ENCODE measurements at regions of chr2 and their contacts with region 1.

Region 1: DNA sequence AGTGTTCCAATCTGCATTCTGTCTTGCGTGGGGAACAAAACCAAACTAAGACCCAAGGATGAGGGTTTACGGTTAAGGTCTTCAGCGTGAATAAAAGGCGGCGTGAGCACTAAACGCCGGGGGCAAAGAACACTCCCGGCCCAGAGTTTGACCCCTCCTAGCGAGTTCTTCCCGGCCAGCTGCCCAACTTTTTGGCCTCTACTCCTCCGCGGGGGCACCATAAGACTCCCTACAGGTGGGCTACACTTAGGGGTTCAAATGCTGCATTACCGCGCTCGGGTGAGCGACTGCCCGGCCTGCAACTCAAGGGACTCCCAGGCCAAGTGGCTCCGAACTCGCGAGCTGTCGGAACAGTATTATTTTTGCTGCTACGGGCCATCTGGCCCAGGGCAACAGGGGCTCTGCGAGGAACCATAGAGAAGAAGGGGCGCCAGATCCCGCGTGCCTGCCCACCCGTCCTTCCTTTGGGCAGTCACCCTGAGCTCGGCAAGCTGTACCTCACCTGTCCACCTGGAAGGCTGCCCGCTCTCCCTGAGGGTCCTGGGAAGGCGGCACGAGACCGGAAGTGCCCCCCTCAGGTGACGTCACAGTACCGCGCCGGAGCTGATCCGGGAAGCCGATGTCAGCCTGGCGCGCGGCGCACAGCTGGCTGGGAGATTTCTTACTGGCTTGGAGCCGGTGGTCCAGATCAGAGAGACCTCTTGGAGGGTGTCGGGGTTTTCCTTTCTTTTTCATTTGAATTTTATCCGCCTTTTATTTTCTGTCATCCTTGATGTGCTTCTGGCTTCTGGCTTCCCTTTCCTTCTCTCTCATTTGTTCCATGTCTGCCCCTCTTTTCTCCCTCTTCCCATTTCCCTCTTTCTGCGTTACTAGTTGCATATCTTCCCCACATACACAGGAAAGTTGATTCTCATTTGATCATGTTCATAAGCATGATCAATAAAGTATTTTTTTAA is at the start of gene LDAH:
- DNase-seq: peak; percentile 76
- H3K4me3 Mint-ChIP-seq: peak within 1 kb of the TSS; percentile 95
- H3K27ac Mint-ChIP-seq: peak within 1 kb of the TSS; percentile 98
- H3K4me1 Mint-ChIP-seq: peaks cover 21% of the 10 kb centered on the region
- H3K27me3 Mint-ChIP-seq: peaks cover 3% of the 10 kb centered on the region
- total RNA-seq, gene LDAH: 34.7 and 35.9 TPM in 2 replicates

Region 2: GRCh38 chr2:20365249-20365817 is 457.5 kb before region 1 on chr2:
- intact Hi-C with region 1: loop called (anchors 2 kb)
- DNase-seq: peak; percentile 52
- H3K4me3 Mint-ChIP-seq: peak overlapping the region; percentile 9
- H3K27ac Mint-ChIP-seq: peak overlapping the region; percentile 51
- H3K4me1 Mint-ChIP-seq: peaks cover 25% of the 10 kb centered on the region
- H3K27me3 Mint-ChIP-seq: peaks cover 4% of the 10 kb centered on the region

Region 3: GRCh38 chr2:20650880-20651730 is 171.7 kb before region 1 on chr2 and contains the start of gene HS1BP3:
- intact Hi-C with region 1: loop called (anchors 5 kb)
- DNase-seq: peak; percentile 88
- H3K4me3 Mint-ChIP-seq: peak within 1 kb of the TSS; percentile 87
- H3K27ac Mint-ChIP-seq: peak within 1 kb of the TSS; percentile 85
- H3K4me1 Mint-ChIP-seq: peaks cover 15% of the 10 kb centered on the region
- H3K27me3 Mint-ChIP-seq: peaks cover 10% of the 10 kb centered on the region
- total RNA-seq, gene HS1BP3: 11.5 and 11.9 TPM in 2 replicates

Region 4: DNA sequence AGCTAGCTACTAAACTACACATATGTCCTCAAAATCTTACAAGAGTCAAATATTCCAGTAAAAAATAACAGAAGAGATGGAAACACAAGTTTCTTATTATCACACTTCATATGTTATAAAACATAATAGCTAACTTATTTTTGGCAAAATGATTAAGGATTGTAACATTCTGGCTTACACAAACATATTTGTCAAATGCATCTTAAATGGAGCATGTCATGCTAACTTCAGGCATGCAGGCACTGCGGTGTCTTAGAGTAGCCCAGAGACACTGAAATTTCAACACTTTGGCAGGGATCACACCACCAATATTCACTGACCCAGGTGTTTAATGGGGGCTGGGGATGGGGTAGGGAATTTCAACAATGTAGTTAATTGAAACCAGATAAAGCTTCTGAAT is 51.5 kb before region 1 on chr2:
- intact Hi-C with region 1: loop called (anchors 5 kb)
- DNase-seq: no peak
- H3K4me3 Mint-ChIP-seq: no peak overlapping the region
- H3K27ac Mint-ChIP-seq: no peak overlapping the region
- H3K4me1 Mint-ChIP-seq: peaks cover 9% of the 10 kb centered on the region
- H3K27me3 Mint-ChIP-seq: no peaks in the 10 kb centered on the region

Region 5: DNA sequence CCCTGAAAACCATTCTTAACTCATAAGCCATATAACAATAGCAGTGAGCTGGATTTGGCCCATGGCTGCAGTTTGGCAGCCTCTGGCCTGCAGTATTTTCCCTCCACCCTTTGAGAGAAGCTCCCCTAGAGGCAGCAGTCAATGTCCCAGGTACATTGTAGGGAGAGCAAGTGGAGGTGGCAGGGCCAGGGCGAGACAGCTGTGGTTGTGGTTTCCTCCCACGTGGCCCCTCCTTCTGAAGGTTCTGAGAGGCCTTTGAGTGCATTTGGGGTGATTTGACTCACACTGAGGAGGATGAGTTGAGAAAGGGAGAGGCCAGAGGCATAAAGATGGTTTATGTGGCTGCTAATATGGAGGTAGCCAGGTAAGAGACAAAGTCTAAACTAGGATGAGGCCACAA is 45.6 kb after region 1 on chr2:
- intact Hi-C with region 1: loop called (anchors 5 kb)
- DNase-seq: peak; percentile 62
- H3K4me3 Mint-ChIP-seq: no peak overlapping the region
- H3K27ac Mint-ChIP-seq: peak overlapping the region; percentile 26
- H3K4me1 Mint-ChIP-seq: peaks cover 11% of the 10 kb centered on the region
- H3K27me3 Mint-ChIP-seq: peaks cover 57% of the 10 kb centered on the region